Heart left ventricle (tissue), 16 donors: ENCODE measurements at regions of chr10 and their contacts with region 1.

Region 1: GRCh38 chr10:21364196-21365114 is 161.0 kb downstream of the SKIDA1 start:
- DNase-seq: peak in 4 of 5 donors; percentile 60 to 70 (median 69)
- ATAC-seq: peak; percentile 73 to 94 (median 90)
- H3K4me3 ChIP-seq: no peak overlapping the region
- H3K27ac ChIP-seq: peak overlapping the region; percentile 29 to 89 (median 66)
- H3K4me1 ChIP-seq: peaks cover 8 to 36% (median 26%) of the 10 kb centered on the region in 12 donors
- H3K27me3 ChIP-seq: no peaks in the 10 kb centered on the region
- CTCF ChIP-seq: no peak
- POLR2A ChIP-seq: no peak

Region 2: DNA sequence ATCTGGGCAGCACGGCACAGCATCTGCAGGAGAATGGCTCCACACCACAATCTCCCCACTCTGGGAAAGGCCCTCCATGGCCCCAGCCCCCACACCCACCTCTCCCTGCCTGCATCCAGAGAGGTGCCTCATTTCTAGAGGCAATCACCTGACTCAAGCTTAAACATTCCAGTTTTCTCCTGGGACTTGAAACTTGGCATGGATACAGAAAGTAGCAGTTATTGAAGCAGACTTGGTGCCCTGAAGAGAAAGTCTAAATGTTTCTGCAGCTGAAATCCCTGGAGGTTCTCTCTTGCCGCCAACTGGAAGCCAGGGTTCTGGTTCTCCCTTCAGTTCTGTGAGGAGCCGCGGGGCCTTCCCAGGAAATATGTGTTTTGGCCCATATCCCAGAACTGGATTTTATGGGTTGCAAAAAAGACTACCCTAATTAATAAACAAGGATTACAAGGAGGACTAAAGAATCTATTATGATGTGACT is 38.2 kb after region 1 on chr10:
- intact Hi-C with region 1: loop called in 1 of 10 experiments (anchors 2 kb)
- DNase-seq: peak in 2 of 5 donors; percentile 27 to 28
- ATAC-seq: peak in 1 of 4 donors; percentile 60
- H3K4me3 ChIP-seq: no peak overlapping the region
- H3K27ac ChIP-seq: no peak overlapping the region
- H3K4me1 ChIP-seq: peaks cover 0 to 22% (median 6%) of the 10 kb centered on the region in 12 donors
- H3K27me3 ChIP-seq: no peaks in the 10 kb centered on the region
- CTCF ChIP-seq: no peak
- POLR2A ChIP-seq: no peak